ENCODE measurements at regions of chr18 and their contacts with region 1.

Region 1: GRCh38 chr18:58416704-58417683 is 211.9 kb downstream of the ALPK2 start:
- DNase-seq: peak in 2 of 6 donors; percentile 31 to 40
- ATAC-seq: peak; percentile 44 to 65 (median 52)
- H3K4me3 ChIP-seq: no peak overlapping the region
- H3K27ac ChIP-seq: peak overlapping the region; percentile 64 to 82 (median 78)
- H3K4me1 ChIP-seq: peaks cover 0 to 6% (median 0%) of the 10 kb centered on the region in 3 donors
- H3K27me3 ChIP-seq: no peaks in the 10 kb centered on the region
- CTCF ChIP-seq: no peak

Region 2: GRCh38 chr18:57258131-57258777 is 1158.7 kb before region 1 on chr18:
- intact Hi-C with region 1: no loop called
- DNase-seq: no peak
- ATAC-seq: no peak
- H3K4me3 ChIP-seq: no peak overlapping the region
- H3K27ac ChIP-seq: no peak overlapping the region
- H3K4me1 ChIP-seq: no peaks in the 10 kb centered on the region
- H3K27me3 ChIP-seq: no peaks in the 10 kb centered on the region
- CTCF ChIP-seq: no peak

Region 3: GRCh38 chr18:58493516-58494253 is 76.7 kb after region 1 on chr18:
- intact Hi-C with region 1: loop called in 1 of 3 experiments (anchors 10 kb)
- DNase-seq: peak; percentile 66 to 82 (median 74)
- ATAC-seq: peak; percentile 90 to 98 (median 95)
- H3K4me3 ChIP-seq: no peak overlapping the region
- H3K27ac ChIP-seq: no peak overlapping the region
- H3K4me1 ChIP-seq: no peaks in the 10 kb centered on the region
- H3K27me3 ChIP-seq: no peaks in the 10 kb centered on the region
- CTCF ChIP-seq: peak; percentile 84 to 86 (median 85)